CD14-positive monocyte (primary cell): ENCODE measurements at regions of chr14 and their contacts with region 1.

Region 1: GRCh38 chr14:23286020-23286905 is at the start of gene HOMEZ:
- DNase-seq: peak; percentile 95 to 96 (median 95)
- H3K4me3 ChIP-seq: peak within 1 kb of the TSS; percentile 70 to 94 (median 89)
- H3K4me3 Mint-ChIP-seq: peak within 1 kb of the TSS; percentile 98 to 99
- H3K27ac ChIP-seq: peak within 1 kb of the TSS; percentile 91 to 95
- H3K27ac Mint-ChIP-seq: peak within 1 kb of the TSS; percentile 94 to 99 (median 97)
- H3K4me1 ChIP-seq: peaks cover 18 to 25% of the 10 kb centered on the region in 2 donors
- H3K4me1 Mint-ChIP-seq: peaks cover 24% of the 10 kb centered on the region
- H3K27me3 ChIP-seq: no peaks in the 10 kb centered on the region
- H3K27me3 Mint-ChIP-seq: peaks cover 0 to 2% (median 0%) of the 10 kb centered on the region in 3 donors
- CTCF ChIP-seq: no peak
- polyA plus RNA-seq, gene HOMEZ: 3.5 to 5.4 (median 4.1) TPM

Region 2: DNA sequence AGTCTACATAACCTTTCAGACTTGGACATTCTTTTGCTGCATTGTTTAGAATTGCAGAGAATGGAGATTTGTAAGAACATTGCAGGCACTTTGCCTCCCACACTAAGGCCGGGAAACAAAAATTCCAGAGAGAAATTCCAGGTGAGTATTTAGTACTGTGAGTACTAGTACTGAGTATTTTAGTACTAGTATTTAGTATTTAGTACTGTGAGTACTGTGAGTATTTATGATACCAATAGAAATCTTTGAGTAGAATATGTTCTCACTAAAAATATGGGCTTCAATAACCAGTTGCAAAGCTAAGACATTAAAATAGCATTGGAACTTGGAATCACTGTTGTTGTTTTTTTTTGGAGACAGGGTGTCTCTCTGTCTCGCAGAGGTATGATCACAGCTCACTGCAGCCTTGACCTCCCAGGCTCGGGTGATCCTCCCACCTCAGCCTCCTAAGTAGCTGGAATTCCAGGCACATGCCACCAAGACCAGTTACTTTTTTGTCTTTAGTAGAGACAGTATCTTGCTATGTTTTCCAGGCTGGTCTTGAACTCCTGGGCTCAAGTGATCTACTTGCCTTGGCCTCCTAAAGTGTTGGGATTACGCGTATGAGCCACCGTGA is 324.1 kb before region 1 on chr14:
- intact Hi-C with region 1: no loop called
- DNase-seq: no peak
- H3K4me3 ChIP-seq: no peak overlapping the region
- H3K4me3 Mint-ChIP-seq: no peak overlapping the region
- H3K27ac ChIP-seq: no peak overlapping the region
- H3K27ac Mint-ChIP-seq: no peak overlapping the region
- H3K4me1 ChIP-seq: peaks cover 6 to 7% of the 10 kb centered on the region in 2 donors
- H3K4me1 Mint-ChIP-seq: peaks cover 5% of the 10 kb centered on the region
- H3K27me3 ChIP-seq: no peaks in the 10 kb centered on the region
- H3K27me3 Mint-ChIP-seq: peaks cover 0 to 3% (median 0%) of the 10 kb centered on the region in 3 donors
- CTCF ChIP-seq: no peak

Region 3: DNA sequence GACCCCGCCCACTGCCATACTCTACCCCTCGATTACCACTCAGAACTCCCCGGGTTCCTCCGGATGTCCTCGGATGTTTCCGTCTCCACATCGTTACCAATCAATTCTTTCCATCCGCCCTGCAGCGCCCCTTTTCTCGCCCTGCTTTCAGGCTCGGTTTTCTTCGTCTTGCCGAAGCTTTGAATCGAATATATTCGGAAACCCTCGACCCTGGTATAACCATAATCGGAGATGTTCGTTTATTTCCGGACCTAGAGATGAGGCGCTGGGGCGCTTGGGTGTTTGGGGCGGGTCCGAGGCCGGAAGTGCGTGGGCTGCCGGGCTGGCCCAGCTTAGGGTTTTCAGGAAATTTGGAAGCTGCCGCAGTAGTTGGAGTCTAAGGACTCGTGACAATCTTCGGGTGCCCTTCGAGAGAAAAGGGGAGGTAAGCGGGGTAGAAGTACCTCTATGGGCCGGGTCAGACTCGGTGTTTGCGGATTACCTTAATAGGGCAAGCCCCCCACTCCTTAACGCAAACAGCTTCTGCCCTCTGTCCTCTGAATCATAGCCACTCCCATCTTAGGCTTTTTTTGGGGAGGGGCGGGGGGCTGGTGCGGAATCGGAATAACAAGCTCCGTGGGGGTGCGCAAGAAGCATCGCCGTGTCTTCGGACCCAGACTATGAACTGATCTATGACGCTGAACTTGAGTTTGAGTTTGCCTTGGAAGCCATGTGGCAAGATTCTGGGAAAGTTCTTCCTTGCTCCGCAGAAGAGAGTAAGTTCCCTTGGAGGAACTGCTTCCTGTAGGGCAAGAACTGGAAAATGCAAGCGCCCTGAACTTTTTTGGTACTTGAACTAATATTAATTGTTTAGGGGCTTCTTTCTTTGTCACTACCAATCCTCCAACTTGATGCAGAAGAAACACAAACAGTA is 190.8 kb before region 1 on chr14 and contains the start of gene C14orf119:
- intact Hi-C with region 1: loop called in 1 of 2 experiments (anchors 10 kb)
- DNase-seq: peak; percentile 100
- H3K4me3 ChIP-seq: peak within 1 kb of the TSS; percentile 80 to 98 (median 88)
- H3K4me3 Mint-ChIP-seq: no peak within 1 kb of the TSS
- H3K27ac ChIP-seq: peak within 1 kb of the TSS; percentile 95 to 96
- H3K27ac Mint-ChIP-seq: no peak within 1 kb of the TSS
- H3K4me1 ChIP-seq: peaks cover 21 to 35% of the 10 kb centered on the region in 2 donors
- H3K4me1 Mint-ChIP-seq: peaks cover 21% of the 10 kb centered on the region
- H3K27me3 ChIP-seq: no peaks in the 10 kb centered on the region
- H3K27me3 Mint-ChIP-seq: no peaks in the 10 kb centered on the region
- CTCF ChIP-seq: no peak
- polyA plus RNA-seq, gene C14orf119: 17.5 to 110 (median 106) TPM

Region 4: GRCh38 chr14:23237772-23238594 is 48.3 kb before region 1 on chr14 and contains the start of gene RNF212B:
- intact Hi-C with region 1: no loop called
- DNase-seq: peak; percentile 73 to 82 (median 78)
- H3K4me3 ChIP-seq: peak within 1 kb of the TSS in 2 of 3 experiments; percentile 22 to 67
- H3K4me3 Mint-ChIP-seq: peak within 1 kb of the TSS; percentile 72 to 84
- H3K27ac ChIP-seq: no peak within 1 kb of the TSS
- H3K27ac Mint-ChIP-seq: peak within 1 kb of the TSS in 3 of 7 donors; percentile 12 to 53 (median 40)
- H3K4me1 ChIP-seq: peaks cover 6 to 10% of the 10 kb centered on the region in 2 donors
- H3K4me1 Mint-ChIP-seq: peaks cover 8% of the 10 kb centered on the region
- H3K27me3 ChIP-seq: no peaks in the 10 kb centered on the region
- H3K27me3 Mint-ChIP-seq: peaks cover 0 to 10% (median 6%) of the 10 kb centered on the region in 3 donors
- CTCF ChIP-seq: no peak
- polyA plus RNA-seq, gene RNF212B: not detected

Region 5: DNA sequence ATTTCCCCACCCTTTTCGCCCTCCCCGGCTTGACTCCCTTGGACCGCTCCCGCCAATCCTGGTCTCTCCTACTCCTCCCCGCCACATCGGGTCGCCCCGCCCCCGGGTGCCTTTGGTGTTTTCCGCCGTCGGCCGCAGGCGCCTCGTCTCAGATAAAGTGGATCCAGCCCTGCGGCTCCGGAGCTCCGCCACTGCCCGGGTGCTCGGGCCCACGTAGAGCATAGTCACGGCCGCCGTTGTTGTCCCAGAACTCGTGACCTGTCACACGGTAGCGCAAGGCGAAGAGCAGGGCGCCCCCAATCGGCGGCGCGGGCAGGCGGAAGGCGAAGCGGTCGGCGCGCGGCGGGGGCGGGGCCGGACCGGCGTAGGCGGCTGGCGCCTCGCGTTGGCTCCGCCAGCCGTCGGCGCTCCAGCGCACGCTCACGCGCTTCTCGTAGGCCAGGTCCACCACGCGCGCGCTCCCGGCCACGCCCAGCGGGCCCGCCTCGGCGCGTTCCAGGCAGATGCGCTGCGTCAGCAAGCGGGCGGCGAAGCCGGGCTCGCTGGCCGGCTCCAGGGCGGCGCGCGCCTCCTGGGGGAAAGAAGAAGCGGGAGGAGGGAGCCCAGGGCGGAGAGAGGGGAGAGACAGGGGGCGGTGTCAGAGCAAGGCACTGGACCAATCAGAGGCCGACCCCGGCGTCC is 15.2 kb after region 1 on chr14:
- intact Hi-C with region 1: loop called (anchors 1 to 2 kb)
- DNase-seq: peak; percentile 98 to 99 (median 98)
- H3K4me3 ChIP-seq: peak overlapping the region; percentile 64 to 97 (median 90)
- H3K4me3 Mint-ChIP-seq: peak overlapping the region; percentile 87 to 96
- H3K27ac ChIP-seq: peak overlapping the region; percentile 93 to 96
- H3K27ac Mint-ChIP-seq: peak overlapping the region; percentile 97 to 99 (median 98)
- H3K4me1 ChIP-seq: peaks cover 32 to 50% of the 10 kb centered on the region in 2 donors
- H3K4me1 Mint-ChIP-seq: peaks cover 38% of the 10 kb centered on the region
- H3K27me3 ChIP-seq: no peaks in the 10 kb centered on the region
- H3K27me3 Mint-ChIP-seq: no peaks in the 10 kb centered on the region
- CTCF ChIP-seq: peak; percentile 68